ENCODE measurements at regions of chr11 and their contacts with region 1.

Region 1: DNA sequence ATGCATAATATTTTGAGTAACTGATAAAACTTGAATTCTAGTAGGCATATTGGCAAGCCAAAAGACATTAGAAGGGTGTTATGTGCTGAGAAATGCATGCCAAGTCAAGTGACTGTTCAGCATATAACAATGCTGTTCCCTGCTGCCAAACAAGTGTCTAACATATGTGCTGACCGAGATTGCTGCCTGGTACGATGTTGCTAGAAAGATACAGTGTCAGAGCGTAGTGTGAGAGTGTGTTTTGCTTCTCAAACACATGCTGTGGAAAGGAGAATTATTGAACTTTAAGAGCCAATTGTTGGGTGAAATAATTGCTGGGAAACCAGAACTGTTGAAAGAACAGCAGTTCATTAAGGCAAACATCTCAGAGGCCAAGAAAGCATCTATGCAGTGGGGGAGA is 71.3 kb upstream of the GRIA4 start:
- DNase-seq: no peak
- ATAC-seq: no peak
- H3K4me3 ChIP-seq: no peak overlapping the region
- H3K27ac ChIP-seq: no peak overlapping the region
- H3K4me1 ChIP-seq: no peaks in the 10 kb centered on the region
- H3K27me3 ChIP-seq: no peaks in the 10 kb centered on the region
- CTCF ChIP-seq: no peak
- EP300 ChIP-seq: no peak
- POLR2A ChIP-seq: no peak
- RAD21 ChIP-seq: no peak

Region 2: GRCh38 chr11:103644676-103645075 is 1893.9 kb before region 1 on chr11:
- CTCF ChIA-PET with region 1: no interaction called
- POLR2A ChIA-PET with region 1: no interaction called
- in situ Hi-C with region 1: no loop called
- intact Hi-C with region 1: loop called (anchors 5 kb)
- DNase-seq: no peak
- ATAC-seq: no peak
- H3K4me3 ChIP-seq: no peak overlapping the region
- H3K27ac ChIP-seq: no peak overlapping the region
- H3K4me1 ChIP-seq: no peaks in the 10 kb centered on the region
- H3K27me3 ChIP-seq: no peaks in the 10 kb centered on the region; a peak in 1 of 5 replicates
- CTCF ChIP-seq: no peak
- EP300 ChIP-seq: no peak
- POLR2A ChIP-seq: no peak
- RAD21 ChIP-seq: no peak

Region 3: GRCh38 chr11:105573091-105573490 is 34.5 kb after region 1 on chr11:
- CTCF ChIA-PET with region 1: no interaction called
- POLR2A ChIA-PET with region 1: no interaction called
- in situ Hi-C with region 1: no loop called
- intact Hi-C with region 1: no loop called
- DNase-seq: no peak
- ATAC-seq: no peak
- H3K4me3 ChIP-seq: no peak overlapping the region
- H3K27ac ChIP-seq: no peak overlapping the region
- H3K4me1 ChIP-seq: no peaks in the 10 kb centered on the region
- H3K27me3 ChIP-seq: no peaks in the 10 kb centered on the region
- CTCF ChIP-seq: no peak
- EP300 ChIP-seq: no peak
- POLR2A ChIP-seq: no peak
- RAD21 ChIP-seq: no peak

Measured in HepG2 (cell line).